Colonic mucosa (tissue), 4 donors: ENCODE measurements at regions of chr9 and their contacts with region 1.

Region 1: GRCh38 chr9:129610473-129611301 is 10.2 kb downstream of the C9orf50 start:
- DNase-seq: peak; percentile 83
- H3K4me3 ChIP-seq: peak overlapping the region; percentile 57
- H3K27ac ChIP-seq: peak overlapping the region; percentile 79
- H3K4me1 ChIP-seq: peaks cover 8% of the 10 kb centered on the region
- H3K27me3 ChIP-seq: no peaks in the 10 kb centered on the region
- CTCF ChIP-seq: peak; percentile 89

Region 2: DNA sequence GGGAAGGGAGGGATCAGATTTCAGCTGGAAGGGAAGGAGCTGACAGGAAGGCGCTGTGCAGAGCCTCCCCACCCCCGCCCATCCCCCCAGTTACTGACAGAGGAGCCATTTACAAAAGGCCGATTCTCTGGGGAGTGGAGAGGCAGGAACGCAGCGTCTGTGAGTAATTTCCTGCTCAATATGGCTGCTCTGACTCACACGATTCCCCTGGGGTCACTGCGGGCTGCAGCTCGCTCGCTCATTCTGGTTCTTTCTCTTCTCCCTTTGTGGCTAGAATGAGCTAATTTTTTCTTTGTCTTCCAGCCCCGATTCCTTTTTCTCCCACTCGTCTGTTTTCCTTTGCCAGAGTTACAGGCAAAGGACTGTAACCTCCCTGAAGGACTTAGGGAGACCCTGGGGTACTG is 470.7 kb before region 1 on chr9:
- intact Hi-C with region 1: loop called (anchors 2 kb)
- DNase-seq: peak; percentile 92
- H3K4me3 ChIP-seq: peak overlapping the region; percentile 29
- H3K27ac ChIP-seq: peak overlapping the region; percentile 98
- H3K4me1 ChIP-seq: peaks cover 25% of the 10 kb centered on the region
- H3K27me3 ChIP-seq: no peaks in the 10 kb centered on the region
- CTCF ChIP-seq: no peak

Region 3: DNA sequence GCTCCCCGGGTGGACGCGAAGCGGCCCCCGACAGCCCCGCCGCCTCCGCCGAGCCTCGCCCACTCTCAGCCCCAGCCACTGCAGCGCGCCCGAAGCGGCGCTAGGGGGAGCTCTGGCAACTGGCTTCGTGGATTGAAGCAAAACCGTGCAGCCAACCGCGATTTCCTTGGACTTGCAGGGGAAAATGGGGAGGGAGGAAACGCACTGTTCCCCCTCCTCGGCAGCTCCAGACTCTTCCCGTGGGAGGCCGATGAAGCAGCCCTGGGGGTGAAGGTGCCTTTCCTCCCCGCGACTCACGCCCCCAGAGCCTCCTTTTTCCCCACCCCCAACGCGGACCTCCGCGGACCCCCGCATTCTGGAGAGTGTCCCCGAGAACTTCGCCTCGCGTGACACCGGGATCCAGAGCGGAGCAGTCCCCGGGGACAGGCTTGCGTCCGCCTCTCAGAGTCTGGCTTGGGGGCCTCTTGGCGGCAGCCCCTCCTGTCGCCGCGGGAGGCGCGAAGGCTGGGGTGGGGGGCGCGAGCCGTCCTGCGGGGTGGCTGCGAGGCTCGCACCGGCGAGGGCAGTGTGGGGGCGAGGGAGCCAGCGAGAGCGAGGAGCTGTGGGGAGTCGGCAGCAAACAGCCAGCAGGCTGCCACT is 436.5 kb before region 1 on chr9:
- intact Hi-C with region 1: loop called (anchors 2 kb)
- DNase-seq: peak; percentile 95
- H3K4me3 ChIP-seq: peak overlapping the region; percentile 73
- H3K27ac ChIP-seq: peak overlapping the region; percentile 98
- H3K4me1 ChIP-seq: peaks cover 12% of the 10 kb centered on the region
- H3K27me3 ChIP-seq: no peaks in the 10 kb centered on the region
- CTCF ChIP-seq: peak; percentile 94

Region 4: GRCh38 chr9:129495534-129496325 is 115.0 kb before region 1 on chr9:
- intact Hi-C with region 1: loop called (anchors 10 kb)
- DNase-seq: peak; percentile 96
- H3K4me3 ChIP-seq: peak overlapping the region; percentile 53
- H3K27ac ChIP-seq: peak overlapping the region; percentile 93
- H3K4me1 ChIP-seq: peaks cover 4% of the 10 kb centered on the region
- H3K27me3 ChIP-seq: no peaks in the 10 kb centered on the region
- CTCF ChIP-seq: no peak